ENCODE measurements at regions of chr1 and their contacts with region 1.

Region 1: GRCh38 chr1:225777583-225778336 is at the start of gene SRP9:
- DNase-seq: peak; percentile 98 to 99 (median 99)
- H3K4me3 ChIP-seq: peak within 1 kb of the TSS; percentile 95
- H3K4me3 Mint-ChIP-seq: no peak within 1 kb of the TSS
- H3K27ac ChIP-seq: peak within 1 kb of the TSS; percentile 99
- H3K27ac Mint-ChIP-seq: no peak within 1 kb of the TSS
- H3K4me1 ChIP-seq: peaks cover 50% of the 10 kb centered on the region
- H3K4me1 Mint-ChIP-seq: peaks cover 34 to 49% (median 35%) of the 10 kb centered on the region in 3 donors
- H3K27me3 ChIP-seq: no peaks in the 10 kb centered on the region
- H3K27me3 Mint-ChIP-seq: no peaks in the 10 kb centered on the region
- total RNA-seq, gene SRP9: 339 TPM

Region 2: GRCh38 chr1:225595974-225596551 is 181.7 kb before region 1 on chr1:
- CTCF ChIA-PET with region 1: no interaction called
- POLR2A ChIA-PET with region 1: no interaction called
- DNase-seq: no peak
- H3K4me3 ChIP-seq: no peak overlapping the region
- H3K4me3 Mint-ChIP-seq: no peak overlapping the region
- H3K27ac ChIP-seq: no peak overlapping the region
- H3K27ac Mint-ChIP-seq: no peak overlapping the region
- H3K4me1 ChIP-seq: no peaks in the 10 kb centered on the region
- H3K4me1 Mint-ChIP-seq: no peaks in the 10 kb centered on the region
- H3K27me3 ChIP-seq: no peaks in the 10 kb centered on the region
- H3K27me3 Mint-ChIP-seq: peaks cover 2 to 19% of the 10 kb centered on the region in 2 donors

Region 3: GRCh38 chr1:225754940-225755641 is 22.7 kb before region 1 on chr1:
- CTCF ChIA-PET with region 1: no interaction called
- POLR2A ChIA-PET with region 1: no interaction called
- DNase-seq: no peak
- H3K4me3 ChIP-seq: no peak overlapping the region
- H3K4me3 Mint-ChIP-seq: no peak overlapping the region
- H3K27ac ChIP-seq: no peak overlapping the region
- H3K27ac Mint-ChIP-seq: no peak overlapping the region
- H3K4me1 ChIP-seq: no peaks in the 10 kb centered on the region
- H3K4me1 Mint-ChIP-seq: no peaks in the 10 kb centered on the region
- H3K27me3 ChIP-seq: no peaks in the 10 kb centered on the region
- H3K27me3 Mint-ChIP-seq: peaks cover 2 to 23% of the 10 kb centered on the region in 2 donors

Region 4: GRCh38 chr1:225848030-225848955 is 70.5 kb after region 1 on chr1:
- CTCF ChIA-PET with region 1: interaction called, 14 read pairs
- POLR2A ChIA-PET with region 1: interaction called, 4 read pairs
- DNase-seq: peak in 4 of 5 donors; percentile 26 to 70 (median 60)
- H3K4me3 ChIP-seq: no peak overlapping the region
- H3K4me3 Mint-ChIP-seq: peak overlapping the region; percentile 26 to 89 (median 79)
- H3K27ac ChIP-seq: no peak overlapping the region
- H3K27ac Mint-ChIP-seq: peak overlapping the region; percentile 84 to 99 (median 95)
- H3K4me1 ChIP-seq: peaks cover 55% of the 10 kb centered on the region
- H3K4me1 Mint-ChIP-seq: peaks cover 56 to 82% (median 76%) of the 10 kb centered on the region in 3 donors
- H3K27me3 ChIP-seq: no peaks in the 10 kb centered on the region
- H3K27me3 Mint-ChIP-seq: no peaks in the 10 kb centered on the region

Region 5: GRCh38 chr1:225896937-225897549 is 119.3 kb after region 1 on chr1:
- CTCF ChIA-PET with region 1: interaction called, 4 read pairs
- POLR2A ChIA-PET with region 1: interaction called, 32 read pairs
- DNase-seq: peak; percentile 46 to 89 (median 85)
- H3K4me3 ChIP-seq: peak overlapping the region; percentile 48
- H3K4me3 Mint-ChIP-seq: peak overlapping the region; percentile 28 to 84 (median 82)
- H3K27ac ChIP-seq: peak overlapping the region; percentile 45
- H3K27ac Mint-ChIP-seq: peak overlapping the region; percentile 90 to 98 (median 95)
- H3K4me1 ChIP-seq: peaks cover 44% of the 10 kb centered on the region
- H3K4me1 Mint-ChIP-seq: peaks cover 45 to 62% (median 53%) of the 10 kb centered on the region in 3 donors
- H3K27me3 ChIP-seq: no peaks in the 10 kb centered on the region
- H3K27me3 Mint-ChIP-seq: no peaks in the 10 kb centered on the region

Region 6: DNA sequence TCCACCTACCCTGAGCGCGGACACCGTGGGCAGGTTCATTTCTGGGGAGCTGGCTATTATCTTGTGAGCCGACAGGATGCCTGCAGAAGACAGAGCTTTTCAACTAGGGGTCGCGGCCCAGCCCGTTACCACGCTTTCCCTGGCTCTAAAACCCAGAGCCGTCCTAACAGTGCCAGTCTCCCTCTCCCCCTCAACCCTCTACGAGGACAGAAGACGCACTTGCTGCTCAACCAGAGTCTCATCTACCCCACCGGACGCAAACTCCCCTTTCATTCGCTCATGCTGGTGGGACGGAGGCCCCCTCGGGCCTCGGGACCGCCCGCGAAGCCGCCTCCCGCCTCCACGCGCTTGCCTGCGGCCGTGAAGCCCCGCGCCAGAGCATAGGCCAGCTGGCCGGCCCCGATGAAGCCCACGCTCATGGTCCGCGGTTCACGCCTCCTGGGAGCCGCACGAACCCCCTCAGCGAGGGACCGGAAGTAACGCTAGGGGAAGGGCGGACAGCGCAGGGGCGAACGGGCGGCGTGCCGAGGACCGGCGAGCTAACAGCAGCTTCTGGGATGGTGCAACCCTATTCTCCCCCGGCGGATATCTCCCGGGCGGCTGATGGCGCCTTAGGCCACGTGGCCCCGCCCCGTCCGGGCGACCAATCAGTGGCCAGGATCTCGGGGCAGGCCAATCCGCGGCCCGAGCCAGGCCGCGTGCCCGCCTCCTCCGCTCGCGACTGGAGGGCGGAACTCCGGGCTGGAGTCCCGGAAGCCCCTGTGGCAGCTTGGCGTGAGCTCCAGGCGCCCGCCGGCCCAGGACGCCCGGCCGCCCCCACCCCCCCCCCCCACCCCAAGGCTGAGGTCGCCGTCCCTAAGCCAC is 146.2 kb after region 1 on chr1 and contains the start of gene PYCR2:
- CTCF ChIA-PET with region 1: interaction called, 7 read pairs
- POLR2A ChIA-PET with region 1: interaction called, 27 read pairs
- DNase-seq: peak; percentile 91 to 96 (median 94)
- H3K4me3 ChIP-seq: peak within 1 kb of the TSS; percentile 99
- H3K4me3 Mint-ChIP-seq: peak within 1 kb of the TSS; percentile 92 to 99 (median 95)
- H3K27ac ChIP-seq: peak within 1 kb of the TSS; percentile 96
- H3K27ac Mint-ChIP-seq: peak within 1 kb of the TSS; percentile 76 to 98 (median 94)
- H3K4me1 ChIP-seq: peaks cover 61% of the 10 kb centered on the region
- H3K4me1 Mint-ChIP-seq: peaks cover 30 to 55% (median 40%) of the 10 kb centered on the region in 3 donors
- H3K27me3 ChIP-seq: no peaks in the 10 kb centered on the region
- H3K27me3 Mint-ChIP-seq: no peaks in the 10 kb centered on the region
- total RNA-seq, gene PYCR2: 130 to 131 TPM

Region 7: GRCh38 chr1:225999227-225999911 is 221.6 kb after region 1 on chr1 and contains the start of gene SDE2:
- CTCF ChIA-PET with region 1: interaction called, 4 read pairs
- POLR2A ChIA-PET with region 1: interaction called, 17 read pairs
- DNase-seq: peak; percentile 99 to 100 (median 100)
- H3K4me3 ChIP-seq: peak within 1 kb of the TSS; percentile 79
- H3K4me3 Mint-ChIP-seq: peak within 1 kb of the TSS; percentile 98 to 100 (median 100)
- H3K27ac ChIP-seq: peak within 1 kb of the TSS; percentile 99
- H3K27ac Mint-ChIP-seq: peak within 1 kb of the TSS; percentile 96 to 100 (median 100)
- H3K4me1 ChIP-seq: peaks cover 81% of the 10 kb centered on the region
- H3K4me1 Mint-ChIP-seq: peaks cover 55 to 87% (median 81%) of the 10 kb centered on the region in 3 donors
- H3K27me3 ChIP-seq: no peaks in the 10 kb centered on the region
- H3K27me3 Mint-ChIP-seq: peaks cover 0 to 1% of the 10 kb centered on the region in 2 donors
- total RNA-seq, gene SDE2: 23.4 to 23.6 TPM